Activated CD4-positive, alpha-beta T cell treated with anti-CD3 and anti-CD28 coated beads for 36 hours (primary cell): ENCODE measurements at regions of chr11 and their contacts with region 1.

Region 1: DNA sequence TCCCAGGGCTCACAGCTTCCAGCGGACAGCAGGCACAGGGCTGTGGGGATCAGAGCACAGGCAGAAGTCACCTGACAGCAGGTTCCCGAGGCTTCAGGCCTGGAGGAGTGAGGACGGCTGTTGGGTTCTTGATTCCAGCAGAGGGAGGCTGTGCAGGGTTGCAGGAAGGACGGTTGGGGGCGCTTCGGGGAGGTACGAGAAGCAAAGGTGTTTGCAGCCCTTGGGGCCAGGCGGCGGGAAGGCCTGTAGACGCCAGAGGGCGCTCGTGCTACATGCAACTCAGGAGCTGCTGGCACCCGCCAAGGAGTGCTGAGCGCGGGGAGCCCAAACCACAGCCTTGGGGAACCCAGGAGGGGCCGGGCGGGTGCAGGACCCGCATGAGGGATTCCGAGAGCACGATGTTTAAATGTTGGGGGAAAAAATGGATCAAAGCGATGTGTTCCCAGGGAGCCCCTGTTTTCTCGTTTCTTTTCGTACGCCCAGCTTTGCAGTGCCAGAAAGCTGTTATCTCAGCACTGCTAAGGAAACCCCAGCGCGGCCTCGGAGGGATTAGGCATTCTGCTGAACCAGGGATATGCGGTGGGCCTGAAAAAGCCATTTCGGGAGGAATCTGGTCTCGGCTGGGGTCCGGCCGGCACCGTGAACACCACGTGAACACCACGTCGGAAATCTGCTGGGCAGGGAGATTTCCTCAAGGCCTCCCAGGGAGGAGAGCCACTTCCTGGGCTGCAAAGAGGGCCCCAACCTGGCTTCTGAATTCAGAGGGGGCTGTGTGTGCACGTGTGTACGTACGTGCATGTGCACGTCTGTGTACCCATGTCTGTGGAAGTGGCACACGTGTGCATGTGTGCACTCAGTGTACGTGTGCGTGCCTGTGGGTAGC is 88.1 kb downstream of the KCNQ1 start:
- DNase-seq: peak; percentile 97
- ATAC-seq: peak; percentile 90
- H3K4me3 Mint-ChIP-seq: peak overlapping the region; percentile 48
- H3K27ac Mint-ChIP-seq: no peak overlapping the region
- H3K4me1 Mint-ChIP-seq: peaks cover 15% of the 10 kb centered on the region
- H3K27me3 Mint-ChIP-seq: no peaks in the 10 kb centered on the region

Region 2: DNA sequence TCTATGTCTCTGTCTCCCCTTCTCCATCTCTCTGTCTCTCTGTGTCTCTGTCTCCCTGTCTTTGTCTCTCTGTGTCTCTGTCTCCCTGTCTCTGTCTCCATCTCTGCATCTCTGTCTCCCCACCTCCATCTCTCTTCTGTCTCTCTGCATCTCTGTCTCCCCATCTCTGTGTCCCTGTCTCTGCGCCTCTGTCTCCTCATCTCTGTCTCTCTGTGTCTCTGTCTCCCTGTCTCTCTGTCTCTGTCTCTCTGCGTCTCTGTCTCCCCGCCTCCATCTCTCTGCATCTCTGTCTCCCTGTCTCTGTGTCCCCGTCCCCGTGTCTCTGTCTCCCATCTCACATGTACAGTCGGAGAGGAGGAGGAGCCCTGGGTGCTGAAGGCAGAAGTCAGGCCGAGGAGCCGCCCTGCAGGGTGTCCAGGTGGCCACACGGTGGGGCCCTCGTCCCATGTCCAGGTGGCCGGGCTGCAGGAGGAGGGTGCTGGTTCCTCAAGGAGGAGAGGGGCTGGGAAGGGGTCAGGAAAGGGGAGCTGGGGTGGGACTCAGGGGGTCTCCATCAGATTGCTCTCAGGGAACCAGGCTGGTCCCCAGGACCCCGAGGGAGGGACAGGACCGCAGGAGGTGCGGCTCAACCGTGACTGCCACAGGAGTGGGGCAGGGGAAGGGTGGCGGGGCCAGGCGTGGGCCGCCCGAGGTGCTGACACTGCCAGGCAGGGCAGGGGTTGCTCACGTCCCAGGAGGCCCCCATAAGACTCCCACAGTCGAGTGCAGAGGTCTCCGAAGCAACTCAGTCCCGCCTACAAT is 335.8 kb before region 1 on chr11:
- CTCF ChIA-PET with region 1: no interaction called
- POLR2A ChIA-PET with region 1: no interaction called
- intact Hi-C with region 1: loop called (anchors 5 to 10 kb)
- DNase-seq: peak; percentile 89
- ATAC-seq: peak; percentile 98
- H3K4me3 Mint-ChIP-seq: no peak overlapping the region
- H3K27ac Mint-ChIP-seq: no peak overlapping the region
- H3K4me1 Mint-ChIP-seq: no peaks in the 10 kb centered on the region
- H3K27me3 Mint-ChIP-seq: peaks cover 8% of the 10 kb centered on the region

Region 3: DNA sequence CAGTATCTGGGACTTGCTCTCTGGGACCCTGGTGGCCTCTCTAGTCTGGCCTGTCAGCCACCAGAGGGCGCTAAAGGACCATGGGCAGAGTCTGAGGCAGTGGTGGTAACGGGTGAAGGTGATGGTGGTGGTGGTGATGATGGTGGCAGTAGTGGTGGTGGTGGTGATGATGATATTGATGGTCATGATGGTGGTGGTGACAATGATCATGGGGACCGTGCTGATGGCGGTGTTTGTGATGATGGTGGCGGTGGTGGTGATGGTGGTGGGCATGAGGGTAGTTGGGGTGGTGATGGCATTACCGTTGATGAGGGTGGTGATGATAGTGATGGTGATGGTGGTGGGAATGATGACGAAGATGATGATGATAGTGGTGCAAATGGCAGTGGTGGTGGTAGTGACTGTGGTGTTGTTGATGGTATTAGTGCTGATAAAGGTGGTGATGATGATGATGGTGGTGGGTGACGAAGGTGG is 104.6 kb before region 1 on chr11:
- CTCF ChIA-PET with region 1: interaction called, 51 read pairs
- POLR2A ChIA-PET with region 1: no interaction called
- intact Hi-C with region 1: loop called (anchors 1 kb)
- DNase-seq: peak; percentile 93
- ATAC-seq: peak; percentile 96
- H3K4me3 Mint-ChIP-seq: no peak overlapping the region
- H3K27ac Mint-ChIP-seq: no peak overlapping the region
- H3K4me1 Mint-ChIP-seq: no peaks in the 10 kb centered on the region
- H3K27me3 Mint-ChIP-seq: no peaks in the 10 kb centered on the region

Region 4: GRCh38 chr11:2885676-2886081 is 352.7 kb after region 1 on chr11 and contains the start of gene CDKN1C:
- CTCF ChIA-PET with region 1: interaction called, 255 read pairs
- POLR2A ChIA-PET with region 1: no interaction called
- intact Hi-C with region 1: loop called (anchors 1 kb)
- DNase-seq: peak; percentile 87
- ATAC-seq: peak; percentile 85
- H3K4me3 Mint-ChIP-seq: peak within 1 kb of the TSS; percentile 67
- H3K27ac Mint-ChIP-seq: no peak within 1 kb of the TSS
- H3K4me1 Mint-ChIP-seq: peaks cover 4% of the 10 kb centered on the region
- H3K27me3 Mint-ChIP-seq: peaks cover 5% of the 10 kb centered on the region
- total RNA-seq, gene CDKN1C: 0.21 to 0.53 TPM

Region 5: GRCh38 chr11:2930704-2931428 is 397.9 kb after region 1 on chr11:
- CTCF ChIA-PET with region 1: interaction called, 3 read pairs
- POLR2A ChIA-PET with region 1: no interaction called
- intact Hi-C with region 1: loop called in 1 of 2 experiments (anchors 1 kb)
- DNase-seq: peak; percentile 80
- ATAC-seq: peak; percentile 28
- H3K4me3 Mint-ChIP-seq: peak overlapping the region; percentile 61
- H3K27ac Mint-ChIP-seq: peak overlapping the region; percentile 47
- H3K4me1 Mint-ChIP-seq: peaks cover 27% of the 10 kb centered on the region
- H3K27me3 Mint-ChIP-seq: peaks cover 19% of the 10 kb centered on the region

Region 6: DNA sequence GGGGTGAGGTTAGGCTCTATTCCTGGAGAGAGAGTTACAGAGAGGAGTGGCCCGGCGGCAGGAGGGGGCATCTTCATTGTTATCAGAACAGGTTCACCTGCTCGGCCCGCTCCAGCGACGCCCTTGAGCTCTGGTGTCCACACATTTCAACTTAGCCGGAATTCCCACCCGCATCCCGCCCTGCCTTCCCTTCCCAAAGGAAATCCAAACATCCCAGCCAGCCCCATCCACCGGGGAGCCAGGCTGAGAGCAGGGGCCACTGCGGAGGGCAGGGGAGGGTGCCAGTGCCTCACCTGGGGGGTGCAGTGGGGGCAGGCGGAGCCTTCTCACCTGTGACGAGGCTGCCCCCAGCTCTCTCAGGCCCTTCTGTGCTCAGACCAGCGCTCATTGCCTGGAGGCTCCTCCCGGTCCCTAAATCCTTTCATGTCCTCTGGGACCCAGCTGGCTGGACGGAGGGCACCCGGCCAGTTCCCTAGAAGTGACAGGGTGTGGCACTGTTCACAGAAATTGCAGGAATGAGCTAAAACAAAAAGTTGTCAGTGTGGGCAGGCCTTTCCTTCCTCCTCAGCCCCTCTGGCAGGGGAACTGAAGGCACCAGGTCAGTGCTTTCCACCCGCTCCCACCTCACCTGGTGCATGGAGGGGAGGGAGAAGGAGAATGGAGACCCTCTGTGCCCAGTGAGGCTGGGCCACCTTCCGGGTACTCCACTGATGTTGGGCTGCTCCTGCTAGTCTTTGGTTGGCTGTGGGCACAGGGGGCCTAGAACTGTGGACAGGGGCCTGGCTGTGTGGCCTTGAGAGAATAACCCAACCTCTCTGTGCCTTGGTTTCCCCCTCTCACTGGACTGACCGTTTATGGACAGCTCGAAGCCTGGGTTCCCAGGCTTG is 687.8 kb after region 1 on chr11:
- CTCF ChIA-PET with region 1: no interaction called
- POLR2A ChIA-PET with region 1: no interaction called
- intact Hi-C with region 1: loop called in 1 of 2 experiments (anchors 5 kb)
- DNase-seq: no peak
- ATAC-seq: no peak
- H3K4me3 Mint-ChIP-seq: no peak overlapping the region
- H3K27ac Mint-ChIP-seq: no peak overlapping the region
- H3K4me1 Mint-ChIP-seq: peaks cover 12% of the 10 kb centered on the region
- H3K27me3 Mint-ChIP-seq: peaks cover 4% of the 10 kb centered on the region